ENCODE measurements at regions of chr15 and their contacts with region 1.

Region 1: DNA sequence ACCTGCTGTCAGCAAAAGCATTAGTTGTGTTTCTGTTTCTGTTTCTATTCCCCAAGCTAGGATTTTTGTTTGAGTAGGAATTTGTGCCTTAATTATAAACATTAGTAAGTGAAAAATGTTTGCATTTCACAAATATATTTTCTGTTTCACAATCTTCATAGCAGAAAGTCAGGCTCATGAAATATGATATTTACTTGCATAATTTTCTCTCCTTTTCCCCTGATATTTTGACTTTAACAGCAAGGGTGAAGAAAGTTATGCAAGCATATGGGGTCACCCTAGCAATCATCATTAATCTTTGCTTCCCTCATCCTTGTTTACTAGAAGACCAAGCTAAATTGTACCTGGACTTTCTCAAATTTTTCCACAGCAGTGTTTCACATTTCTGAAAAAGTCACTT is 140.3 kb upstream of the SEMA6D start:
- DNase-seq: no peak
- ATAC-seq: no peak
- H3K4me3 ChIP-seq: no peak overlapping the region
- H3K27ac ChIP-seq: no peak overlapping the region
- H3K4me1 ChIP-seq: peaks cover 0 to 8% (median 0%) of the 10 kb centered on the region in 9 donors
- H3K27me3 ChIP-seq: no peaks in the 10 kb centered on the region
- CTCF ChIP-seq: no peak

Region 2: DNA sequence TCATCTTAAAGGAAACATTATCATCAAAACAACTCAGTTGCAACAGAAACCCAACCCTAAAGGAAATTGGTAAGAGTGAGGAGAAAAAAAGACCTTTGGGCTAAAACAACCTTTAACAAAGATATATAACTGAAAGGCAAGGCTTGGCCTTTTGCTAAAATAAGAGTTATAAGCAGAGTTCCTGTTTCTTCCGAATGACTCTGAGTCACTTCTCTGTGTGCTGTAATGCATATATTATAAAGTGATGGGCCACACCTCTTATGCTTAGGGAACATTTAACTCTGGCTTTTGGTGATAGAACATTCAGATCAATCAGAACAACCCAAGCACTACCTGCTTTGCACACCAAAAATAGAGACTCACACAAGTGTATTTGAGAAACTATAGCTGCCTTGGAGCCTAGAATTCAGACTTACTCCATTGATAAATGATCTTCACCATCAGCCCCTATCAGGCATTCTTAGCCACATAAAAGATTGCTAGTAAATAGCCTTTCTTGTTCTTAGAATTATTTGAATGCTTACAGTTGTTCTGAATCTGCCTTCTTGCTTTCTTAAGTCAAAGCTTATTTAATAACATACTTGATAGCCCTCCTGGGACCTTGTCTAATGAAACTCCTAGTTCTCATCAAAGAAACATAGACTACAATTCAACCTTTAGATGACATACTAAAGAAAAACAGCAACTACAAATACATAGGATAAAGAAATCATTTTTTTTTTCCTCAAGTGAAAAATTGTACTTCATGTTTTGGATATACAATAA is 153.9 kb before region 1 on chr15:
- intact Hi-C with region 1: no loop called
- DNase-seq: no peak
- ATAC-seq: no peak
- H3K4me3 ChIP-seq: no peak overlapping the region
- H3K27ac ChIP-seq: no peak overlapping the region
- H3K4me1 ChIP-seq: no peaks in the 10 kb centered on the region
- H3K27me3 ChIP-seq: no peaks in the 10 kb centered on the region
- CTCF ChIP-seq: no peak

Region 3: GRCh38 chr15:47529241-47529640 is 47.8 kb before region 1 on chr15:
- intact Hi-C with region 1: loop called in 1 of 10 experiments (anchors 1 kb)
- DNase-seq: no peak
- ATAC-seq: no peak
- H3K4me3 ChIP-seq: no peak overlapping the region
- H3K27ac ChIP-seq: no peak overlapping the region
- H3K4me1 ChIP-seq: peaks cover 0 to 3% (median under 1%) of the 10 kb centered on the region in 9 donors
- H3K27me3 ChIP-seq: peaks cover 0 to 87% (median 0%) of the 10 kb centered on the region in 7 donors
- CTCF ChIP-seq: no peak

Measured in heart right ventricle (tissue), 16 donors.